ENCODE measurements at regions of chr5 and their contacts with region 1.

Region 1: GRCh38 chr5:93582677-93583438 is at the start of gene NR2F1:
- DNase-seq: peak; percentile 92
- H3K4me3 Mint-ChIP-seq: no peak within 1 kb of the TSS
- H3K27ac Mint-ChIP-seq: no peak within 1 kb of the TSS
- H3K4me1 Mint-ChIP-seq: peaks cover 11% of the 10 kb centered on the region
- H3K27me3 Mint-ChIP-seq: no peaks in the 10 kb centered on the region
- CTCF ChIP-seq: no peak
- total RNA-seq, gene NR2F1: 1.4 and 1.7 TPM in 2 replicates

Region 2: DNA sequence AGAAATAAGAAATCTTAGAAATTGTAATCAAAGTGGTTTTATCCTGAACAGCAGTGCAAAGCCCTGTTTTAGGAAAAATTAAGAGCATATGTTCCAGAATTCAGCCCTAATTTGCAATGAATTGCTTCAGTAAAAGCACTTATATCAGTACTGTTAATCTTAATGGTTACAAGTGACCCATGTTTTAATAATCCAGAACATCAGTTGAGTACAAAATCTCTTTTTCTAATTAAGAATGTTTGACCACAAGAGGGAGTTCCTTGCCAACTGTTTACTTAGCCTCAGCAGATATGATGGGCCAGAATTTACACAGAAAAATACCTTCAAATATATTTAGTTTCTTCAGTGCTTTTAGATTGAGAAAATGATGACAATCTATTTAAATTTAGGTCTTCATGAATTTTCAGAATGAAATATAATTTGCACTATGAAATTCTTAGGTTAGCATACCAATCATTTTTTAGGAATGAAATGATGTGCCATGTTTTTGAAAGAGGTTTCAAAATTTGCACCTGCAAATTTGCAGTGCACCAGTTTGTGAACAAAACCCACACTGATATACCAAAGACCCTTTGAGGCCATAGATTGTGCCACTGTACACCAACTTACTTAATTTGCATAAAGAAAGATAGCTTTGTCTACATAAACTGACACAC is 1273.4 kb before region 1 on chr5:
- CTCF ChIA-PET with region 1: no interaction called
- POLR2A ChIA-PET with region 1: no interaction called
- intact Hi-C with region 1: loop called (anchors 5 kb)
- DNase-seq: peak; percentile 49
- H3K4me3 Mint-ChIP-seq: no peak overlapping the region
- H3K27ac Mint-ChIP-seq: no peak overlapping the region
- H3K4me1 Mint-ChIP-seq: peaks cover 5% of the 10 kb centered on the region
- H3K27me3 Mint-ChIP-seq: no peaks in the 10 kb centered on the region
- CTCF ChIP-seq: peak; percentile 53

Region 3: DNA sequence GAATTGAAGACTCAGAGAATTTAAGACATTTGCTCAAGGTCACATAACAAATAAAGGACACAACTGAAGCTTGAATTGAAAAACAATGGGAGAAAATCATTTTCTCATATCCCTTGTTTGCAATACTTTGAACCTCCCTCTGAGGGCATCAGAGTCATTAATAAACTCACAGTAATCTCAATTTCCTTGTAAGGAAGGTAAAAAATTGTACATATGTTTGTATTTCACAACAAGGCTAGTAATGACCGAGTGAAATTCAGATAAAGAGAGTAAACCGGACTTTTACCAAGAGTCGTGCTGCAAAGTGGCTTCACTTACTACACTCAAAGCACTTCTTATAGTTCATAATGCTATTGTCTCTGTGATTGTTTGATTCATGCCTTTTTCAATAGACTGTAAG is 666.8 kb before region 1 on chr5:
- CTCF ChIA-PET with region 1: interaction called, 3 read pairs
- POLR2A ChIA-PET with region 1: no interaction called
- intact Hi-C with region 1: loop called (anchors 5 kb)
- DNase-seq: peak; percentile 36
- H3K4me3 Mint-ChIP-seq: no peak overlapping the region
- H3K27ac Mint-ChIP-seq: no peak overlapping the region
- H3K4me1 Mint-ChIP-seq: no peaks in the 10 kb centered on the region
- H3K27me3 Mint-ChIP-seq: no peaks in the 10 kb centered on the region
- CTCF ChIP-seq: no peak

Region 4: DNA sequence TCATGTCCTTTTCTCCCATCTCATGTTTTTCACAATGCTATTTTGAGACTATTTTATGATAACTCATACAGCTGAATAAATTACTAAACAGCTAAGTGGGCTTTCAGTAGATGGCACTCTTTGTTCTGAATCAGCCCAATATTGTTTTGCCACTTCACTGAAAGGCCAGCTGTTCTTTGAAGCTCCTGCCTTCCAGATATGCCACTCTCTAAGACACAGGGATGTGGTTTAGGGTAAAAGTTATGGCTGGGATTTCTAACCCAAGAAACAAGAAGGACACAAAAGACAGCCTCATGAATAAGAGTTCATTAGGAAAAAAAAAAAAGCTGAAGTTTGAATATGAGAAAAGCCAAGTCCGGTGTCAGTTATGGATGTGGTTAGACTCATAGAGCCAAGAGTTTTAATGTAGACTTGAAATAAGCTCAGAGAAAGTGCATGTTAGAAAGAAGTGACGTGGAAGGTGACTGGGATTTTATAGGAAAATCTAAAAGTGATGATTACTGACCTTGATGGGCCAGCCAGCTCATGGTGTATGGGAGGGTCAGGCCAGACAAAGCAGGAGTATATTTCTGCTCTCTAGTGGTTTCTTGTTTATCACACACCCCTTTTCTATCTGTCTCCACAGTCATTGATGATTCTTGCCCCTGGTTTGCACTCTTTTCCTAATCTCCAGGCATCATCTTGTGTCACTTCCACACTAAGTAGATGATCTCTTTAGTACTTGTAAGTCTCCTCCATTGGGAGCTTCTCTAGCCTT is 490.3 kb before region 1 on chr5:
- CTCF ChIA-PET with region 1: interaction called, 4 read pairs
- POLR2A ChIA-PET with region 1: no interaction called
- intact Hi-C with region 1: loop called (anchors 1 kb)
- DNase-seq: peak; percentile 40
- H3K4me3 Mint-ChIP-seq: no peak overlapping the region
- H3K27ac Mint-ChIP-seq: no peak overlapping the region
- H3K4me1 Mint-ChIP-seq: no peaks in the 10 kb centered on the region
- H3K27me3 Mint-ChIP-seq: no peaks in the 10 kb centered on the region
- CTCF ChIP-seq: peak; percentile 35

Region 5: DNA sequence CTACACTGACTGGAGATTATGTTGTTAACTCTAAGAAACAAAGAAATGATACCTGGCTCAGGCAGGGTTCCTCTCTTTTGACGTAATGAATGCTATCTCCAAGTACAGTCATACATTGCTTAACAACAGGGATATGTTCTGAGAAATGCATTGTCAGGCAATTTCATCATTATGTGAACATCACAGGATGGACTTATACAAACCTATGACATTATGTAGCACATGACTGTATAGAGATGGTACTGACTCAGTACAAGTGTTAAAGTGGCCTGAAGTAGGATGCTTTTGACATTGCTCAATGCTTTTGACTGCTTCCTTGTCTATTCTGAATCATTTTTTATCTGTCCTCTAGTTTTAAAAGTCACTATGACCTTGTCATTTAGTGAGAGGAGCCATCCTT is 149.5 kb before region 1 on chr5:
- CTCF ChIA-PET with region 1: no interaction called
- POLR2A ChIA-PET with region 1: no interaction called
- intact Hi-C with region 1: loop called (anchors 10 kb)
- DNase-seq: peak; percentile 66
- H3K4me3 Mint-ChIP-seq: no peak overlapping the region
- H3K27ac Mint-ChIP-seq: no peak overlapping the region
- H3K4me1 Mint-ChIP-seq: peaks cover 6% of the 10 kb centered on the region
- H3K27me3 Mint-ChIP-seq: no peaks in the 10 kb centered on the region
- CTCF ChIP-seq: no peak

Region 6: DNA sequence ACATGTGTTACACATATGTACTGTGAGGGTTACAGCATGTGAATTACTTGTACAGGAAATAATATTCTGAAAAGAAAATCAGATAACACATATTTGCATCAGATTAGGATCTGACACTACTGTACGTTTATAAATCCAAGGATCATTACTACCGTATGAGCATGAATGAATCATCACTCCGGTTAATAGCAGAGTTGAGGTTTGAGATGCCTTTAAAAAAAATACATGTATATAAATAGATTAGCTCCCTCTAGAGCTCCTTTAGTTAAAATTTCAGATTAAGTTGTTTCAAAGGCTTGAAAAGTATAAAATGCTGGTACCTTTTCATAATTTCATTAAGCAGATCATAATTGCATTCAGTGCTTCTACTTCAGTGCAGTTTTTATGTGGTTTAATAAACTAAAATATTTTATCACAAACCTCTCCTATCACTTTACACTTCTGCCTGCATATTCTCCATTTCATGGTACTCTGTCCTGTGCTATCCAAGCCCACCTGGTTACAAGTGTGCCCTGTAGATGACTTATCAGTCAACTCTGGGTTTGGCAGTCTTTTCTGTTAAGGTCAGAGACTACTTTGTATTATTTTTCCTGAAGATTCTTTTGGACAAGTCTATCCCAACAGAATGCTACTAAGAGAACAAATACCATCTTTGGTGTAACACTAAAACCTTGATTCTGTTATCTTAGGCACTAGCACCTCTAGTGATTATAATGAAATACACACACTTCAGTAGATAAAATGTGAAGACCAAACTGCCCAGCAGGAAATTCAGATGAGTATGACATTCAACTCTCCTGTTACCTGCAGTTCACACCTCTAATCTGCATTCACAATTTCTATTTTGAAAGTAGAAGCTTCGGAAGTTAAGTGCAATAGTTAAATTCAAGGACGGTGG is 206.6 kb after region 1 on chr5:
- CTCF ChIA-PET with region 1: no interaction called
- POLR2A ChIA-PET with region 1: interaction called, 3 read pairs
- intact Hi-C with region 1: loop called (anchors 5 kb)
- DNase-seq: peak; percentile 43
- H3K4me3 Mint-ChIP-seq: no peak overlapping the region
- H3K27ac Mint-ChIP-seq: no peak overlapping the region
- H3K4me1 Mint-ChIP-seq: peaks cover 5% of the 10 kb centered on the region
- H3K27me3 Mint-ChIP-seq: no peaks in the 10 kb centered on the region
- CTCF ChIP-seq: no peak

Region 7: GRCh38 chr5:93915142-93915553 is 332.3 kb after region 1 on chr5:
- CTCF ChIA-PET with region 1: interaction called, 3 read pairs
- POLR2A ChIA-PET with region 1: no interaction called
- intact Hi-C with region 1: loop called (anchors 2 kb)
- DNase-seq: peak; percentile 45
- H3K4me3 Mint-ChIP-seq: no peak overlapping the region
- H3K27ac Mint-ChIP-seq: no peak overlapping the region
- H3K4me1 Mint-ChIP-seq: no peaks in the 10 kb centered on the region
- H3K27me3 Mint-ChIP-seq: no peaks in the 10 kb centered on the region
- CTCF ChIP-seq: peak; percentile 48